Activated B cell treated with CpG ODN at 0.5 μM for 24 hours (primary cell): ENCODE measurements at regions of chr5 and their contacts with region 1.

Region 1: DNA sequence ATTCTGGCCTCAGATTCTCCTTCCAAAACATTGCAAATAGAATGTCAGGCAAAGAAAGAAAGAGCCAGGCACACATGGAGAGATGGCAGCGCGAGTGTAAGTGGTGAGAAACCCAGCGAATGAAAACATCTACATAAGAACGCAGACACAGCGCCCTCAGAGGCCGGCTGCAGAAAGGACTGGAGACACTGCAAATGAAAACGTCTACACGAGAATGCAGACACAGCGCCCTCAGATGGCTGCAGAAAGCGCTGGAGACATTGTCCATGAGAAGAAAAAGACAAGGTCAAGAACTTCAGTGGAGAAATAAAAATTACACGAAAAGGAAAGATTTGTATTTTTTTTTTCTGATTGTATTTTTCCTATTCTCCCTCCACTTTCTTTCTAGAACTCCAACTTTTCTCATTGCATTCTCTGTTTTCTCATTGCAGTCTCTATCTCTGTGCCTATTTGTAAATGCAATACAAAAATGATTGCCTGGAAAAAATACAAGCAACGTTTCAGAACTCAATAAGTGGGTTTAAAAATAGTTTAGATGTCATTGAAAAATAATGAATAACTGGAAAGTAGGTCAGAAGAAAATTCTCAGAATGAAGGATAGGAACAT is 117.9 kb upstream of the LPCAT1 start:
- DNase-seq: peak; percentile 55
- ATAC-seq: peak; percentile 87
- H3K4me3 Mint-ChIP-seq: no peak overlapping the region
- H3K27ac Mint-ChIP-seq: peak overlapping the region; percentile 46
- H3K4me1 Mint-ChIP-seq: peaks cover 16% of the 10 kb centered on the region
- H3K27me3 Mint-ChIP-seq: peaks cover 20% of the 10 kb centered on the region
- CTCF ChIP-seq: peak; percentile 64

Region 2: GRCh38 chr5:923281-923873 is 718.3 kb before region 1 on chr5:
- CTCF ChIA-PET with region 1: interaction called, 11 read pairs
- POLR2A ChIA-PET with region 1: no interaction called
- intact Hi-C with region 1: loop called (anchors 1 kb)
- DNase-seq: peak; percentile 65
- ATAC-seq: peak; percentile 89
- H3K4me3 Mint-ChIP-seq: no peak overlapping the region
- H3K27ac Mint-ChIP-seq: no peak overlapping the region
- H3K4me1 Mint-ChIP-seq: no peaks in the 10 kb centered on the region
- H3K27me3 Mint-ChIP-seq: peaks cover 18% of the 10 kb centered on the region
- CTCF ChIP-seq: peak; percentile 59

Region 3: DNA sequence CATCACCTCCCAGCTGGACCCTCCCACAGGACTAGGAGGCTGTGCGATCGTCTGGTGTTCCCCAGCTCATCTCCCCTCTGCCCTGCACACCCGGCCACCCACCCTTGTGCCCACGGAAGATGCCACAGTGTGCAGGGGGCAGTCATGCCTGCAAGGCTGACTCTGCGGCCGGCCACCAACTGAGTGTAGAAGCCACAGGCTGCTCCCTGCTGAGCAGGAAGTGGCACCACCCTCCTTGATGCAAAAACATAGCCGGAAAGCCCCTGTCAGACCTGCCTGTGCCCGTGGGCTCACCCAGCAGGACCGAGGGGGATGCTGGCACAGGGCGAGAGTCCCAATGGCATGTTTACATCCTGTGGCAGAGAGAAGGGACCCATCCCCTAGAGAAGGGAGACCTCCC is 489.5 kb before region 1 on chr5:
- CTCF ChIA-PET with region 1: interaction called, 5 read pairs
- POLR2A ChIA-PET with region 1: no interaction called
- intact Hi-C with region 1: loop called (anchors 5 kb)
- DNase-seq: peak; percentile 37
- ATAC-seq: peak; percentile 87
- H3K4me3 Mint-ChIP-seq: peak overlapping the region; percentile 63
- H3K27ac Mint-ChIP-seq: peak overlapping the region; percentile 80
- H3K4me1 Mint-ChIP-seq: peaks cover 45% of the 10 kb centered on the region
- H3K27me3 Mint-ChIP-seq: peaks cover 18% of the 10 kb centered on the region
- CTCF ChIP-seq: no peak

Region 4: GRCh38 chr5:1174122-1174936 is 467.3 kb before region 1 on chr5:
- CTCF ChIA-PET with region 1: interaction called, 36 read pairs
- POLR2A ChIA-PET with region 1: interaction called, 3 read pairs
- intact Hi-C with region 1: no loop called
- DNase-seq: peak; percentile 33
- ATAC-seq: peak; percentile 37
- H3K4me3 Mint-ChIP-seq: no peak overlapping the region
- H3K27ac Mint-ChIP-seq: no peak overlapping the region
- H3K4me1 Mint-ChIP-seq: no peaks in the 10 kb centered on the region
- H3K27me3 Mint-ChIP-seq: peaks cover 7% of the 10 kb centered on the region
- CTCF ChIP-seq: no peak

Region 5: DNA sequence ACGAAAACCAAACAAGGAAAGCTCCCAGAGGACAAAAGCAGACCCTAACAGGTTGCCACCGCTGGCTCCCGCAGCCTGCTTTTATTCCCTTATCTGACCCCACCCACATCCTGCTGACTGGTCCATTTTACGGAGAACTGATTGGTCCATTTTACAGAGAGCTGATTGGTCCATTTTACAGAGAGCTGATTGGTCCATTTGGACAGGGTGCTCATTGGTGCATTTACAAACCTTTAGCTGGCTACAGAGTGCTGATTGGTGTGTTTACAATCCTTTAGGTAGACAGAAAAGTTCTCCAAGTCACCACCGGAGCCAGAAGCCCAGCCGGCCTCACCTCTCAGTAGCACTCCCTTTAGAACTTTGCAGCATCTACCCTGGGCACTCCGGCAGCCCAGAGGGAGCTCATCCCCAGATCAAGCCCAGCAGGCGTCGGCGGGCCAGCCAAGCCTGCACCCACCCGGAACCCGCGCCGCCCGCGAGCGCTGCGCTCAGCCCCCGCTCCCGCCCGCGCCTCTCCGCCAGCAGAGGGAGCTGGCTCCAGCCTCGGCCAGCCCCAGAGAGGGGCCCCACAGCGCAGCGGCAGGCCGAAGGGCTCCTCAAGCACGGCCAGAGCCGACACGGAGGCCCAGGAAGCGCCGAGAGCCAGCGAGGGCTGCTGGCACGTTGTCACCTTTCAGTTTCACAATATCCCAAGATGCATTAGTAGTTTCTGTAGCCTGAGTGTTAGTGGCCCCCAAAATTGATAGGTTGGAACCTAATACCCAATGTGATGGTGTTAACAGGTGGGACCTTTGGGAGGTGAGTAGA is 261.4 kb before region 1 on chr5:
- CTCF ChIA-PET with region 1: interaction called, 12 read pairs
- POLR2A ChIA-PET with region 1: no interaction called
- intact Hi-C with region 1: loop called (anchors 1 kb)
- DNase-seq: peak; percentile 69
- ATAC-seq: peak; percentile 97
- H3K4me3 Mint-ChIP-seq: peak overlapping the region; percentile 78
- H3K27ac Mint-ChIP-seq: no peak overlapping the region
- H3K4me1 Mint-ChIP-seq: peaks cover 22% of the 10 kb centered on the region
- H3K27me3 Mint-ChIP-seq: peaks cover 5% of the 10 kb centered on the region
- CTCF ChIP-seq: peak; percentile 50

Region 6: GRCh38 chr5:1536322-1536845 is 105.3 kb before region 1 on chr5:
- CTCF ChIA-PET with region 1: no interaction called
- POLR2A ChIA-PET with region 1: no interaction called
- intact Hi-C with region 1: loop called (anchors 5 kb)
- DNase-seq: peak; percentile 54
- ATAC-seq: peak; percentile 97
- H3K4me3 Mint-ChIP-seq: peak overlapping the region; percentile 63
- H3K27ac Mint-ChIP-seq: peak overlapping the region; percentile 93
- H3K4me1 Mint-ChIP-seq: peaks cover 36% of the 10 kb centered on the region
- H3K27me3 Mint-ChIP-seq: no peaks in the 10 kb centered on the region
- CTCF ChIP-seq: no peak

Region 7: GRCh38 chr5:1652596-1653345 is 11.1 kb after region 1 on chr5:
- CTCF ChIA-PET with region 1: interaction called, 12 read pairs
- POLR2A ChIA-PET with region 1: interaction called, 5 read pairs
- intact Hi-C with region 1: no loop called
- DNase-seq: no peak
- ATAC-seq: no peak
- H3K4me3 Mint-ChIP-seq: peak overlapping the region; percentile 66
- H3K27ac Mint-ChIP-seq: no peak overlapping the region
- H3K4me1 Mint-ChIP-seq: peaks cover 32% of the 10 kb centered on the region
- H3K27me3 Mint-ChIP-seq: peaks cover 22% of the 10 kb centered on the region
- CTCF ChIP-seq: no peak

Region 8: DNA sequence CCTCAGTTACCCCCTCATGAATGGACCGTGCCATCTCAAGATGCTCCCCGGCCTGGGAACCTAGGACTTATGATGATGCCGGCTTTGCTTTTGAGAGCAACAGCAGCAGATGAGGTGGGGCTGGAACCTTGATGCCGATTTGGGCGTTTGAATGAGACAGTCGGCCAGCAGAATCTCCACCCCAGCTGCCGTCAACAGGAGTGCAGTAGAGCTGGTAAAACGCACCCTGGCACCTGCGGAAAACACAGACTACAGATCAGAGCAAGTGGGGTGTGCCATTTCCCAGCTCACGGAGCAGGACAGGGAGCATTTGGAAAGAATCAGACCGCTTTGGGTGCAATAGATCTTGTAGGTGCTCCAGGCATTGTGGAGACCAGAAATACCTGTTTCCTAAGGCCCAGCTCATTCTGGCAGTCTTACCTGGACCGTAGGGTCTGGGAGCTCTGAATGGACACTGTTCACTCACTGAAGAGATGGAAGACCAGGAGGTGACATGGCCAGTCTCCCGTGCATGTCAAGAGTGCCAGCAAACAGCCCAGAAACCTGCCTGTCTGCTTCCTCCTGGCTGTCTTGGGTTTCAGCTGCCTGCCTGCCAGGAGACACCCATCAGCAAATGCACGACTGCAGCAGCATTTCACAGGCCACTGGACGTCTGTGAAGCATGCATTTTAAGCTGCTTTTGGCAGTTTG is 558.7 kb after region 1 on chr5:
- CTCF ChIA-PET with region 1: no interaction called
- POLR2A ChIA-PET with region 1: no interaction called
- intact Hi-C with region 1: no loop called
- DNase-seq: no peak
- ATAC-seq: no peak
- H3K4me3 Mint-ChIP-seq: no peak overlapping the region
- H3K27ac Mint-ChIP-seq: no peak overlapping the region
- H3K4me1 Mint-ChIP-seq: no peaks in the 10 kb centered on the region
- H3K27me3 Mint-ChIP-seq: no peaks in the 10 kb centered on the region
- CTCF ChIP-seq: no peak